GM12878 (cell line): ENCODE measurements at regions of chr13 and their contacts with region 1.

Region 1: GRCh38 chr13:74026753-74027152 is 107.5 kb downstream of the KLF12 start:
- DNase-seq: peak; percentile 71
- ATAC-seq: peak; percentile 97
- H3K4me3 ChIP-seq: peak overlapping the region; percentile 53
- H3K27ac ChIP-seq: peak overlapping the region; percentile 96
- H3K4me1 ChIP-seq: peaks cover 8% of the 10 kb centered on the region; the same call in 1 of the 2 replicates
- H3K27me3 ChIP-seq: no peaks in the 10 kb centered on the region
- CTCF ChIP-seq: no peak
- EP300 ChIP-seq: no peak
- POLR2A ChIP-seq: peak; percentile 41; the same call in 1 of the 2 replicates
- RAD21 ChIP-seq: peak; percentile 30; the same call in 1 of the 2 replicates

Region 2: GRCh38 chr13:73967397-73968165 is 59.2 kb before region 1 on chr13:
- CTCF ChIA-PET with region 1: interaction called, 3 read pairs
- POLR2A ChIA-PET with region 1: no interaction called
- RAD21 ChIA-PET with region 1: interaction called, 8 read pairs
- SMC1A ChIA-PET with region 1: interaction called, 14 read pairs
- in situ Hi-C with region 1: no loop called
- intact Hi-C with region 1: no loop called
- DNase-seq: peak; percentile 89
- ATAC-seq: peak; percentile 99
- H3K4me3 ChIP-seq: no peak overlapping the region
- H3K27ac ChIP-seq: no peak overlapping the region; the same call in 1 of the 2 replicates
- H3K4me1 ChIP-seq: peaks cover 17% of the 10 kb centered on the region
- H3K27me3 ChIP-seq: no peaks in the 10 kb centered on the region
- CTCF ChIP-seq: no peak
- EP300 ChIP-seq: no peak
- POLR2A ChIP-seq: no peak
- RAD21 ChIP-seq: 0 out of 2 replicates have a peak, but pooled peaks have one; percentile 1

Region 3: GRCh38 chr13:73991884-73992283 is 34.9 kb before region 1 on chr13:
- CTCF ChIA-PET with region 1: interaction called, 3 read pairs
- POLR2A ChIA-PET with region 1: interaction called, 5 read pairs
- RAD21 ChIA-PET with region 1: interaction called, 15 read pairs
- SMC1A ChIA-PET with region 1: interaction called, 27 read pairs
- in situ Hi-C with region 1: no loop called
- intact Hi-C with region 1: no loop called
- DNase-seq: no peak
- ATAC-seq: peak; percentile 18; the same call in 1 of the 3 replicates
- H3K4me3 ChIP-seq: no peak overlapping the region
- H3K27ac ChIP-seq: 0 out of 2 replicates have a peak overlapping the region, but pooled peaks have one; percentile 15
- H3K4me1 ChIP-seq: 0 out of 2 replicates have a peak, but pooled peaks cover 5% of the 10 kb centered on the region
- H3K27me3 ChIP-seq: no peaks in the 10 kb centered on the region
- CTCF ChIP-seq: no peak
- EP300 ChIP-seq: no peak
- POLR2A ChIP-seq: no peak
- RAD21 ChIP-seq: no peak

Region 4: DNA sequence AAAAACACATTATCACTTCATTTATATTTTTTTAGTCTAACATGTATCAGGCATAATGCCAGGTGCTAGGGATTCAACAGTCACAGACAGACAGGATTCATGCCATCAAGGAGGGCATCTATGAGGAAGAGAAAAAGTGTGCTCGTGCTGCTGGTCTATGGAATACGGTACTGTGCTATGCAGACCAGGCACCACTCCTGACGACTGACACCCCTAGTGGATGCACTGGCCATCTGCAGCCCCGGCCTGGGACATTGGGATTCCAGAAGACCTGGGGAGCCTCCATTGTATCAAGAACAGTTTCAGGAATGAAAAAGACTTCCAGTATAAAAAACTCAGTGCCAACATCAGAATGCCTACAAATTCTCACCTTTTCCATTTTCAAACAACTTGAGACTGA is 13.4 kb after region 1 on chr13:
- CTCF ChIA-PET with region 1: interaction called, 20 read pairs
- POLR2A ChIA-PET with region 1: interaction called, 4 read pairs
- RAD21 ChIA-PET with region 1: interaction called, 9 read pairs
- SMC1A ChIA-PET with region 1: interaction called, 16 read pairs
- in situ Hi-C with region 1: no loop called
- intact Hi-C with region 1: no loop called
- DNase-seq: no peak
- ATAC-seq: peak; percentile 100
- H3K4me3 ChIP-seq: no peak overlapping the region
- H3K27ac ChIP-seq: no peak overlapping the region
- H3K4me1 ChIP-seq: no peaks in the 10 kb centered on the region; the same call in 1 of the 2 replicates
- H3K27me3 ChIP-seq: no peaks in the 10 kb centered on the region
- CTCF ChIP-seq: peak; percentile 82 to 88 (median 87)
- EP300 ChIP-seq: no peak
- POLR2A ChIP-seq: no peak
- RAD21 ChIP-seq: peak; percentile 75

Region 5: GRCh38 chr13:74062933-74063332 is 36.2 kb after region 1 on chr13:
- CTCF ChIA-PET with region 1: interaction called, 7 read pairs
- POLR2A ChIA-PET with region 1: interaction called, 16 read pairs
- RAD21 ChIA-PET with region 1: interaction called, 19 read pairs
- SMC1A ChIA-PET with region 1: interaction called, 19 read pairs
- in situ Hi-C with region 1: no loop called
- intact Hi-C with region 1: loop called (anchors 2 kb)
- DNase-seq: peak; percentile 52
- ATAC-seq: peak; percentile 90
- H3K4me3 ChIP-seq: peak overlapping the region; percentile 59
- H3K27ac ChIP-seq: peak overlapping the region; percentile 75
- H3K4me1 ChIP-seq: peaks cover 27% of the 10 kb centered on the region
- H3K27me3 ChIP-seq: no peaks in the 10 kb centered on the region
- CTCF ChIP-seq: no peak
- EP300 ChIP-seq: no peak
- POLR2A ChIP-seq: no peak
- RAD21 ChIP-seq: peak; percentile 13; the same call in 1 of the 2 replicates

Region 6: GRCh38 chr13:74080762-74081161 is 54.0 kb after region 1 on chr13:
- CTCF ChIA-PET with region 1: no interaction called
- POLR2A ChIA-PET with region 1: no interaction called
- RAD21 ChIA-PET with region 1: no interaction called
- SMC1A ChIA-PET with region 1: no interaction called
- in situ Hi-C with region 1: no loop called
- intact Hi-C with region 1: no loop called
- DNase-seq: no peak
- ATAC-seq: no peak
- H3K4me3 ChIP-seq: no peak overlapping the region
- H3K27ac ChIP-seq: no peak overlapping the region
- H3K4me1 ChIP-seq: no peaks in the 10 kb centered on the region
- H3K27me3 ChIP-seq: no peaks in the 10 kb centered on the region
- CTCF ChIP-seq: no peak
- EP300 ChIP-seq: no peak
- POLR2A ChIP-seq: no peak
- RAD21 ChIP-seq: no peak

Region 7: DNA sequence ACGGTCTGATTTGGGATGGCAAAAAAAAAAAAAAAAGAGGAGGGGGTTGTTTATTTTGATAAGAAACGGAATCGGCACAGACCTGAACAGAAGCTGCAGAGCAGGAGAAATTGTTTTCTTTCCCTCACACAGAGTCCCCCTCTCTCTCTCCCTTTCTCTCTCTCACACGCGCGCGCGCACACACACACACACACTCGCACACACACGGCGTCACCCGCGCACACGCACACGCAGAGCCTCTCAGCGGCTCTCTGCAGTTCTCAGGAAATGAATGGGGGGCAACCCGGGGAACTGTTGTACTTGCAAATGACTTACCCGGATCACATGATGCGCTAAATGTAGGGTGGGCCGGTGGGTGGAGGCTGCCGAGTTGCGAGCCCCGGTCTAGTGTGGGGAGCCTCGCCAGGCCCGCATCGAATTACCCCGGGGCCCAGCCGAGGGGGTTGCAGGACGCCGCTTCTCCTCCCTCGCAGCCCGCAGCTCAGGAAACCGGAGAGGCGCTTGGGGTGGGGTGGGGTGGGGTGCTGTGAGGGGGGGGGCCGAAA is 107.0 kb after region 1 on chr13:
- CTCF ChIA-PET with region 1: no interaction called
- POLR2A ChIA-PET with region 1: interaction called, 6 read pairs
- RAD21 ChIA-PET with region 1: interaction called, 6 read pairs
- SMC1A ChIA-PET with region 1: interaction called, 7 read pairs
- in situ Hi-C with region 1: no loop called
- intact Hi-C with region 1: loop called (anchors 2 kb)
- DNase-seq: peak; percentile 64
- ATAC-seq: peak; percentile 70
- H3K4me3 ChIP-seq: peak overlapping the region; percentile 82
- H3K27ac ChIP-seq: peak overlapping the region; percentile 45
- H3K4me1 ChIP-seq: peaks cover 5% of the 10 kb centered on the region; the same call in 1 of the 2 replicates
- H3K27me3 ChIP-seq: no peaks in the 10 kb centered on the region
- CTCF ChIP-seq: no peak
- EP300 ChIP-seq: peak in 1 of 2 experiments; percentile 25; a peak in 1 of 4 replicates
- POLR2A ChIP-seq: no peak; the same call in none of the 2 replicates
- RAD21 ChIP-seq: 0 out of 2 replicates have a peak, but pooled peaks have one; percentile 1